ENCODE measurements at regions of chr21 and their contacts with region 1.

Region 1: DNA sequence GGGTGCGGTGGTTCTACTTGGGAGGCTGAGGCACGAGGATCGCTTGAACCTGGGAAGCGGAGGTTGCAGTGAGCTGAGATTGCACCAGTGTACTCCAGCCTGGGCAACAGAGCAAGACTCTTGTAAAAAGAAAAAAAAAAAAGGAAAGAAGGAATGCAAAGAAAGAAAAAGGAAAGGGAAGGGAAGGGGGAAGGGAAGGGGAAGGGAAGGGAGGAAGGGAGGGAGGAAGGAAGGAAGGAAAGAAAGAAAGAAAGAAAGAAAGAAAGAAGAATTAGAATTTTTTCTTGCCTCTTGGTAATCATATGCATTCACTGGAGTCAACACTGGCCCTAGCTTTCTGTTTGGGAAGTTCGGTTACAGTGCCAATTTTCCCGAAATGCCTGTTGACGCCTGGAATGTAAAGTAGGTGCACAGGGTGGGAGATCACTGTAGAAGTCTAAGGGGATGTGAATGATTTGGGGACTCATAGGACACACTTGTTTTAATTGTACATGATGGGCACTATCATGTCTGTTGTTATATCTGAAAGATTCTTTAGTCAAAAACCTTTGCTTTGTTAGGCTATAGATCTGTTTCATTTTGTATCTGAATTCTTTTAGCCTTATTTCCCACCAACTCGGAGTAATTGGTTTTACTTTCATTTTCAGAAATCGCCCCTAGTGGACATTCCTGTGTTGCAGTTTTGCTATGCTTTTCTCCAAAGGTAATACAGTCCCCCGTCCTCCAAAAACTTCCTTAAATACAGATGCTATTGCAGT is 59.8 kb upstream of the MORC3 start:
- DNase-seq: peak; percentile 36
- H3K4me3 ChIP-seq: peak overlapping the region; percentile 60
- H3K27ac ChIP-seq: peak overlapping the region; percentile 68
- H3K27me3 ChIP-seq: no peaks in the 10 kb centered on the region
- CTCF ChIP-seq: peak; percentile 79

Region 2: GRCh38 chr21:36104317-36105300 is 155.6 kb before region 1 on chr21:
- CTCF ChIA-PET with region 1: no interaction called
- POLR2A ChIA-PET with region 1: no interaction called
- DNase-seq: no peak
- H3K4me3 ChIP-seq: 0 out of 2 replicates have a peak overlapping the region, but pooled peaks have one; percentile 17
- H3K27ac ChIP-seq: no peak overlapping the region
- H3K27me3 ChIP-seq: peaks cover 26% of the 10 kb centered on the region
- CTCF ChIP-seq: peak; percentile 60

Region 3: DNA sequence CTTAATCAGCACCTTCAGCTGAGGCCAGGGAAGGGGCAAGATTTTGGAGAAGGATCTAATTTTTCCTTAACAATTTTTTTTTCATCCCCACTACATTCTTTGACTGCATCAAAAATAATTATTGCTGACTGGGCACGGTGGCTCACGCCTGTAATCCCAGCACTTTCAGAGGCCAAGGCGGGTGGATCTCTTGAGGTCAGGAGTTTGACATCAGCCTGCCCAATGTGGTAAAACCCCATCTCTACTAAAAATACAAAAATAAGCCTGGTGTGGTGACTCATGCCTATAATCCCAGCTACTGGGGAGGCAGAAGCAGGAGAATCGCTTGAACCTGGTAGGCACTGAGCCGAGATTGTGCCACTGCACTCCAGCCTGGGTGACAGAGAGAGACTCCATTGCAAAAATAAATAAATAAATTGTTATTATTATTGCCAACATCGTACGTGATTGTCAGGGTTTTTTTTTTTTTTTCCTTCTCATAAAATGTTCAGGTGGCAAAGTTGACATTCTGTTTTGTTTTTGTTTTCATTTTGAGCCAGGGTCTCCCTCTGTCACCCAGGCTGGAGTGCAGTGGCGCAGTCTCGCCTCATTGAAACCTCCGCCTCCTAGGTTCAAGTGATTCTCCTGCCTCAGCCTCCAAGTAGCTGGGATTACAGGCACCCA is 22.5 kb after region 1 on chr21:
- CTCF ChIA-PET with region 1: interaction called, 13 read pairs
- POLR2A ChIA-PET with region 1: no interaction called
- DNase-seq: no peak
- H3K4me3 ChIP-seq: no peak overlapping the region
- H3K27ac ChIP-seq: no peak overlapping the region
- H3K27me3 ChIP-seq: no peaks in the 10 kb centered on the region
- CTCF ChIP-seq: no peak

Region 4: GRCh38 chr21:36297921-36298594 is 37.8 kb after region 1 on chr21:
- CTCF ChIA-PET with region 1: interaction called, 3 read pairs
- POLR2A ChIA-PET with region 1: interaction called, 10 read pairs
- DNase-seq: no peak
- H3K4me3 ChIP-seq: no peak overlapping the region
- H3K27ac ChIP-seq: no peak overlapping the region
- H3K27me3 ChIP-seq: no peaks in the 10 kb centered on the region
- CTCF ChIP-seq: no peak

Region 5: GRCh38 chr21:36510114-36510655 is 250.0 kb after region 1 on chr21:
- CTCF ChIA-PET with region 1: no interaction called
- POLR2A ChIA-PET with region 1: no interaction called
- DNase-seq: no peak
- H3K4me3 ChIP-seq: no peak overlapping the region
- H3K27ac ChIP-seq: peak overlapping the region; percentile 21
- H3K27me3 ChIP-seq: peaks cover 40% of the 10 kb centered on the region
- CTCF ChIP-seq: no peak

Measured in AG04450 (cell line).